K562 (cell line): ENCODE measurements at regions of chr12 and their contacts with region 1.

Region 1: DNA sequence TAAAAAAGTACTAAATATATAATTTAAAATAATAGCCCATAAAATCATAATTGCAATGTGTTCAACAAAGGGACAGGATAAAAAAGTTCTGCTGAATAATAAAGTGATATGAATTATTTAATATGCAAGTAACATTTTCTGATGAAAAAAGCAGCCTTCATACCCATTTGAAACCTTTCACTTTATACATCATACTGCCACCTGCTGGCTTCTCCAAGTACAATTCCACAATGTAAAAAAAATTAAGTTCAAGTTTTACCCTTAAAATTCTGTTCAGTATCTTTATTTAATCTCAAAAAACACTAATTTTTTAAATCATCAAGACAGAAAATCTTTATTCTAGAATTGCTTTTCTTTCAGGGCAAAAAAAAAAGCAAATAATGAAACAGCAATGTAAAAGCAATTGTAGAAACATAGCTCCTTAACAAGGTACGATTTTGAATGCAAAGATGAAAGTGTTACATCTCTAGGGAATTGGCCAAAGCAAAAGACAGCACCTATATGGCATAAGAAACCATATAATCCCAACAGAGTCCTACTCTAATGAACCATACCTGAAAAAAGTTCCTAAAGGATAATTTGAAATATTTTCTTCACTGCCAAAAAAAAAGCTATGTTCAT is 15.0 kb downstream of the MDM1 start:
- DNase-seq: peak; percentile 20 to 65 (median 26)
- ATAC-seq: no peak
- H3K4me3 ChIP-seq: no peak overlapping the region
- H3K27ac ChIP-seq: no peak overlapping the region
- H3K4me1 ChIP-seq: peaks cover 0 to 6% of the 10 kb centered on the region in 2 experiments; a peak in 2 of 5 replicates
- H3K27me3 ChIP-seq: no peaks in the 10 kb centered on the region
- CTCF ChIP-seq: peak in 2 of 3 experiments; percentile 40 to 78; a peak in 3 of 6 replicates
- EP300 ChIP-seq: no peak
- POLR2A ChIP-seq: no peak
- RAD21 ChIP-seq: peak; percentile 81 to 88

Region 2: GRCh38 chr12:68040450-68041075 is 276.6 kb before region 1 on chr12:
- CTCF ChIA-PET with region 1: interaction called, 3 read pairs
- POLR2A ChIA-PET with region 1: no interaction called
- in situ Hi-C with region 1: no loop called
- intact Hi-C with region 1: loop called (anchors 1 kb)
- DNase-seq: peak; percentile 66 to 79 (median 69)
- ATAC-seq: peak; percentile 86
- H3K4me3 ChIP-seq: no peak overlapping the region
- H3K27ac ChIP-seq: no peak overlapping the region
- H3K4me1 ChIP-seq: peaks cover 4 to 14% of the 10 kb centered on the region in 2 experiments; a peak in 4 of 5 replicates
- H3K27me3 ChIP-seq: no peaks in the 10 kb centered on the region; a peak in 1 of 5 replicates
- CTCF ChIP-seq: peak; percentile 63 to 88 (median 80)
- EP300 ChIP-seq: no peak
- POLR2A ChIP-seq: no peak
- RAD21 ChIP-seq: peak; percentile 67 to 80

Region 3: DNA sequence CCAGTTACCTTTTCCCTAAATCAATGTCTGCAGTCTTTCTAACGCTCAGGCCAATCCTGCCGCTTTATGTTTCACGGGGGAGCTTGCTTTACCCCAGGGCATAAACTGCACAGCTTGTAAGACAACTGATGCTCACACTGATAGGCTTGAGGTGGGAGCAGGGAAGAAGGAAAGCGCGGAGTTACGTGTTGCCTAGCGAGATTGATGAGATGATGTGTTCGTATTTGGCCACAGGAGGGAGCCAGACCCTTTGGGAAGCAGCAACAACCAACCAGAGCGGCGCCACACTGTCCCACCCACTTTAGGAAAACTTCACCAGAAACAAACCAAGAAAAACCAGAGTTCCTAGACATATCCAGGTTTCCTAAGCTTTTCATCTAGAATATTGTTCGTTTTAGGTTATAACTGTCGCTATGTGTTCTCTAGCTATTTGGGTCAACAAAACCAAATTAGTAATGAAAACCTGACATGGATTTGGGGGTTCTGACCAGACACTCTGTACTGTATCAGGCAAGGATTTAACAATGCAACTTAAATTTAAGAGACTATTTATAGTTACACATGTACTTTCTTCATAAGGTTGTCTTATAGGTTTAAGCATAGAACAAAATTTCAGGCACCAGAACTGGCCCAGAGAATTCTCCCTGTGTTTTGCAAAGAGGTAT is 93.9 kb before region 1 on chr12:
- CTCF ChIA-PET with region 1: interaction called, 30 read pairs
- POLR2A ChIA-PET with region 1: no interaction called
- in situ Hi-C with region 1: loop called (anchors 5 kb)
- intact Hi-C with region 1: loop called (anchors 1 kb)
- DNase-seq: peak; percentile 79 to 90 (median 85)
- ATAC-seq: peak; percentile 100
- H3K4me3 ChIP-seq: no peak overlapping the region
- H3K27ac ChIP-seq: no peak overlapping the region
- H3K4me1 ChIP-seq: no peaks in the 10 kb centered on the region; a peak in 1 of 5 replicates
- H3K27me3 ChIP-seq: peaks cover 3 to 7% of the 10 kb centered on the region in 2 experiments; a peak in 2 of 5 replicates
- CTCF ChIP-seq: peak; percentile 89 to 94 (median 91)
- EP300 ChIP-seq: no peak
- POLR2A ChIP-seq: no peak
- RAD21 ChIP-seq: peak; percentile 97

Region 4: GRCh38 chr12:68236421-68237059 is 80.6 kb before region 1 on chr12:
- CTCF ChIA-PET with region 1: interaction called, 3 read pairs
- POLR2A ChIA-PET with region 1: no interaction called
- in situ Hi-C with region 1: no loop called
- intact Hi-C with region 1: loop called (anchors 5 kb)
- DNase-seq: peak in 3 of 4 experiments; percentile 14 to 59 (median 49)
- ATAC-seq: peak; percentile 84
- H3K4me3 ChIP-seq: peak overlapping the region; percentile 11; the same call in 1 of the 2 replicates
- H3K27ac ChIP-seq: no peak overlapping the region
- H3K4me1 ChIP-seq: peaks cover 0 to 8% of the 10 kb centered on the region in 2 experiments; a peak in 3 of 5 replicates
- H3K27me3 ChIP-seq: peaks cover 7 to 14% of the 10 kb centered on the region in 2 experiments; a peak in 2 of 5 replicates
- CTCF ChIP-seq: no peak
- EP300 ChIP-seq: no peak
- POLR2A ChIP-seq: no peak
- RAD21 ChIP-seq: no peak